IMR-90 (cell line): ENCODE measurements at regions of chr15 and their contacts with region 1.

Region 1: GRCh38 chr15:90320061-90320884 is 31.8 kb upstream of the ZNF774 start:
- DNase-seq: peak; percentile 90
- ATAC-seq: peak; percentile 98
- H3K4me3 ChIP-seq: no peak overlapping the region
- H3K27ac ChIP-seq: no peak overlapping the region
- H3K4me1 ChIP-seq: peaks cover 6% of the 10 kb centered on the region
- H3K27me3 ChIP-seq: no peaks in the 10 kb centered on the region
- CTCF ChIP-seq: peak; percentile 100
- POLR2A ChIP-seq: peak; percentile 53; the same call in 1 of the 2 replicates
- RAD21 ChIP-seq: peak; percentile 100

Region 2: DNA sequence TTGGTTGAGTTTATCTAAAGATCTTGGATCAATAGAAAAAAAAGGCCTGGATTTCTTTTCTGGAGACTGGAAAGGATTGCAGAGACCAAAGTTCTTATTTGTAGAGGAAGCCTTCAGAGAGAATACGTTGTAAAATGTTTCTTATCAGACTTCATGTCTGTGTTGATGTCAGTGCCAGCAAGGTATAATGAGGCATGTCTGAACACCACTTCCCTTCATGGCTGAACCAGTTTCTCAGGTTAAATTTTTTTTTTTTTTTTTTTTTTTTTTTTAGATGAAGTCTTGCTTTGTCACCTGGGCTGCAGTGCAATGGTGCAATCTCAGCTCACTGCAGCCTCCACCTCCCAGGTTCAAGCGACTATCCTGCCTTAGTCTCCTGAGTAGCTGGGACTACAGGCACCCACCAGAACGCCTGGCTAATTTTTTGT is 14.0 kb after region 1 on chr15:
- CTCF ChIA-PET with region 1: interaction called, 12 read pairs
- POLR2A ChIA-PET with region 1: no interaction called
- dilution Hi-C with region 1: no loop called
- in situ Hi-C with region 1: no loop called
- intact Hi-C with region 1: no loop called
- DNase-seq: no peak
- ATAC-seq: no peak
- H3K4me3 ChIP-seq: no peak overlapping the region
- H3K27ac ChIP-seq: no peak overlapping the region
- H3K4me1 ChIP-seq: peaks cover 8% of the 10 kb centered on the region
- H3K27me3 ChIP-seq: no peaks in the 10 kb centered on the region
- CTCF ChIP-seq: no peak
- POLR2A ChIP-seq: no peak
- RAD21 ChIP-seq: no peak

Region 3: DNA sequence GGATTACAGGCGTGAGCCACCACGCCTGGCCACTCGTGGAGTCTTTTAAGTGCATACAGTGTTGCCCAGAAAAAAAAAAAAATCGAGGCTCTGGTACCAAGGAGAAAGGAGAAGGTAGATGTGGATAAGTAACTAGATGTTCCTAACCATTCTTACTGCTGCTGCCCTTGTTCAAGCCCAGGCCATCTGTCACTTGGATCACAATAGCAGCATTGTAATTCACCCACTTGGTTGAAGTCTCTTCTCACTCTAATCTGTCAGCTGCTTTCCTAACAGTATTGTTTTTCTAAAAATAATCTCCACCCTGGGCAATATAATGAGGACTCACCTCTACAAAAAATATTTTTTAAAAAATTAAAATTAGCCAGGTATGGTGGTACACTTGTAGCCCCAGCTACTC is 151.5 kb after region 1 on chr15:
- CTCF ChIA-PET with region 1: interaction called, 4 read pairs
- POLR2A ChIA-PET with region 1: interaction called, 3 read pairs
- dilution Hi-C with region 1: no loop called
- in situ Hi-C with region 1: loop called (anchors 5 kb)
- intact Hi-C with region 1: no loop called
- DNase-seq: no peak
- ATAC-seq: no peak
- H3K4me3 ChIP-seq: no peak overlapping the region
- H3K27ac ChIP-seq: no peak overlapping the region
- H3K4me1 ChIP-seq: no peaks in the 10 kb centered on the region
- H3K27me3 ChIP-seq: no peaks in the 10 kb centered on the region
- CTCF ChIP-seq: no peak
- POLR2A ChIP-seq: no peak
- RAD21 ChIP-seq: no peak

Region 4: DNA sequence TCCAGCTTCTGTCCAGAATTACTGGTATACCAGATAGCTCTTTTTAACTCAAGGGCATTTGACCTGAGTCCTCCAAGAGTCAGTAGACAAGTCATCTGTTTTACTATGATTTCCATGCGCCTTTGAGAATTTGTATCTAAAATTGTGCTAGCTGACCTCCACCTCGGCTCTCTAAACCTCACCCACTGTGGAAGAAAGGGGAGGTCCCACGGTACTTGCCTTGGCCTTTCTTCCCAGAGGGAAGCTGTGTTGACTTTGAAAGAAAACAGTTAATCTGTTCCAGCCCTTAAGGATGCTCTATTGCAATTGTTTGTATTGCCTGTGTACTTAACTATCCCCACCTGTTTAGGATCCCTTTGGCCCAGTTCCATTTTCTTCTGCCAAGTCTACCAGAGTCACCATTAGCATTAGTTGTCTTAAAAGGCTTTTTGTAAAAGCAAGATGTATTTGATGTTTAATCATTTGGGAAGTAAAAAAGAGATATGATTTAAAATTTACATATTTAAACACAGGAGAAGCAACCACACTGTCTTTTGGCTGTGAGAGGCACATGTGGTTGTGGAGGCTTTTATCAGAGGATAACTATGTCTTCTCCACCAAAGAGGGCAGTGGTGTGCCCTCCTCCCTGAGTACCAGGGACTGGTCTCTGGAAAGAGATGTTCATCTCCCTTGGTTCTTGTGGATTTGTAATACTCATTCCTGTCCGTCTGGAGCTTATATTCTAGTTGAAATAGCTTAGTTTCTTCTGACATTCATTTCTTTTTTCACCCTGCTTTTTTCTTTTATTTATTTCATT is 298.3 kb after region 1 on chr15:
- CTCF ChIA-PET with region 1: no interaction called
- POLR2A ChIA-PET with region 1: no interaction called
- dilution Hi-C with region 1: no loop called
- in situ Hi-C with region 1: no loop called
- intact Hi-C with region 1: loop called (anchors 10 kb)
- DNase-seq: peak; percentile 17
- ATAC-seq: no peak
- H3K4me3 ChIP-seq: no peak overlapping the region
- H3K27ac ChIP-seq: no peak overlapping the region
- H3K4me1 ChIP-seq: peaks cover 3% of the 10 kb centered on the region
- H3K27me3 ChIP-seq: no peaks in the 10 kb centered on the region
- CTCF ChIP-seq: no peak
- POLR2A ChIP-seq: no peak
- RAD21 ChIP-seq: no peak

Region 5: DNA sequence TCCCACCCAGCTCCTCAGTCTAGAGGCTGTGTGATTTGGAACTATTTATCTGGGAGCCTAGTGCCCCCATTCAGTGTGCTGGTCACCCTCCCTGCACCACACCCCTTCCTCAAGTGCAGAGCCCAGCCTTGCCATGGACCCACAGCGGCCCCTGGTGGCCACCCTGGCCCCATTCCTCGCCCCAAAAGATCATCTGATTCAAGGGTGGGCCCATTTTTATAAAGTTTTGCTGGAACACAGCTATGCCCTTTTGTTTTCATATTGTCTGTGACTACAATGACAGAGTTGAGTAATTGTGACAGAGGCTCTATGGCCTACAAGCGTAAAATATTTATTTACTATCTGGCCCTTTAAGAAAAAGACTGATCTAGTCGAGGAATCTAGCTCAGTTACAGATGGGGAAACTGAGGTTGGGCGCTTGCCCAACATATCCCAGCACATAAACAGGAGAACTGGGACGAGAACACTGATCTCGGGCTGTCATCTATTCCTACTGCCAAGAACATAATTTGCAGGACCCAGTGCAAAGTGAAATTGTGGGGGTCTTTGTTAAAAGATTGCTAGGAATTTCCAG is 565.9 kb after region 1 on chr15:
- CTCF ChIA-PET with region 1: interaction called, 6 read pairs
- POLR2A ChIA-PET with region 1: no interaction called
- dilution Hi-C with region 1: no loop called
- in situ Hi-C with region 1: loop called (anchors 25 kb)
- intact Hi-C with region 1: loop called (anchors 1 kb)
- DNase-seq: peak; percentile 51
- ATAC-seq: peak; percentile 69
- H3K4me3 ChIP-seq: no peak overlapping the region
- H3K27ac ChIP-seq: no peak overlapping the region
- H3K4me1 ChIP-seq: peaks cover 16% of the 10 kb centered on the region
- H3K27me3 ChIP-seq: no peaks in the 10 kb centered on the region
- CTCF ChIP-seq: peak; percentile 97
- POLR2A ChIP-seq: no peak
- RAD21 ChIP-seq: peak; percentile 98